MCF 10A (cell line): ENCODE measurements at regions of chr3 and their contacts with region 1.

Region 1: GRCh38 chr3:88203642-88204055 is 53.9 kb downstream of the C3orf38 start:
- DNase-seq: peak; percentile 75
- H3K4me3 Mint-ChIP-seq: no peak overlapping the region
- H3K27ac Mint-ChIP-seq: no peak overlapping the region
- H3K4me1 Mint-ChIP-seq: no peaks in the 10 kb centered on the region
- H3K27me3 Mint-ChIP-seq: no peaks in the 10 kb centered on the region
- CTCF ChIP-seq: peak; percentile 91

Region 2: GRCh38 chr3:88452228-88452627 is 248.6 kb after region 1 on chr3:
- CTCF ChIA-PET with region 1: no interaction called
- POLR2A ChIA-PET with region 1: no interaction called
- intact Hi-C with region 1: no loop called
- DNase-seq: no peak
- H3K4me3 Mint-ChIP-seq: no peak overlapping the region
- H3K27ac Mint-ChIP-seq: no peak overlapping the region
- H3K4me1 Mint-ChIP-seq: no peaks in the 10 kb centered on the region
- H3K27me3 Mint-ChIP-seq: no peaks in the 10 kb centered on the region
- CTCF ChIP-seq: no peak

Region 3: DNA sequence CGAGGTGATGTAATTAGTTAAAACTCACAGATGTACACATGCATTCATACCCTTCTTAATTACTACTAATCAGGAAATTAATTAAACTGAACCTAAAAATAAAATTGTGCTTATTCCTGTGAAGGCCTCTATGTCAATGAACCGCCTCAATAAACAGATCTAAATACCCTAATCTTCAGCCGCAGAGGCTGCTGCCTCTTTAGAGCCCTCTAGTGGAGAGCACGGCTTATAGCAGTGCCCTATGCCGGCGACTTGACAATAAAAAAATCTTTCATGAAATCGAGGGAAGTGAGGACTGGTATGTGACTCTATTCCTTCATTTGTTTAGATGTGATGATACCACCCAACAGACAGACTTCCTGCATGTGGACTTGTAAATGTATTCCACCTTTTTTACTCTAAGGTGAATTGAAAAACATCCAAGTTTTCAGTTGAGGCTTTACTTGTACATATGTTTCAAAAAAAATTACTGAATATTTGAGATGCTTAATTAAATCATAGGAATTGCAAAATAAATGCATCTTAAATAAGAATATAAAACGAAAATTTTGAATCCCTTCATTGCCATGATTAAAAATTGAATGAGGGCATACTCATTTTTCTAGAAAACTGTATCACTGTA is 895.4 kb after region 1 on chr3:
- CTCF ChIA-PET with region 1: no interaction called
- POLR2A ChIA-PET with region 1: no interaction called
- intact Hi-C with region 1: loop called (anchors 5 kb)
- DNase-seq: peak; percentile 60
- H3K4me3 Mint-ChIP-seq: no peak overlapping the region
- H3K27ac Mint-ChIP-seq: no peak overlapping the region
- H3K4me1 Mint-ChIP-seq: peaks cover 7% of the 10 kb centered on the region
- H3K27me3 Mint-ChIP-seq: no peaks in the 10 kb centered on the region
- CTCF ChIP-seq: peak; percentile 90

Region 4: GRCh38 chr3:89113903-89114840 is 910.5 kb after region 1 on chr3:
- CTCF ChIA-PET with region 1: interaction called, 6 read pairs
- POLR2A ChIA-PET with region 1: no interaction called
- intact Hi-C with region 1: loop called (anchors 5 kb)
- DNase-seq: peak; percentile 75
- H3K4me3 Mint-ChIP-seq: peak overlapping the region; percentile 85
- H3K27ac Mint-ChIP-seq: no peak overlapping the region
- H3K4me1 Mint-ChIP-seq: no peaks in the 10 kb centered on the region
- H3K27me3 Mint-ChIP-seq: peaks cover 35% of the 10 kb centered on the region
- CTCF ChIP-seq: peak; percentile 60

Region 5: DNA sequence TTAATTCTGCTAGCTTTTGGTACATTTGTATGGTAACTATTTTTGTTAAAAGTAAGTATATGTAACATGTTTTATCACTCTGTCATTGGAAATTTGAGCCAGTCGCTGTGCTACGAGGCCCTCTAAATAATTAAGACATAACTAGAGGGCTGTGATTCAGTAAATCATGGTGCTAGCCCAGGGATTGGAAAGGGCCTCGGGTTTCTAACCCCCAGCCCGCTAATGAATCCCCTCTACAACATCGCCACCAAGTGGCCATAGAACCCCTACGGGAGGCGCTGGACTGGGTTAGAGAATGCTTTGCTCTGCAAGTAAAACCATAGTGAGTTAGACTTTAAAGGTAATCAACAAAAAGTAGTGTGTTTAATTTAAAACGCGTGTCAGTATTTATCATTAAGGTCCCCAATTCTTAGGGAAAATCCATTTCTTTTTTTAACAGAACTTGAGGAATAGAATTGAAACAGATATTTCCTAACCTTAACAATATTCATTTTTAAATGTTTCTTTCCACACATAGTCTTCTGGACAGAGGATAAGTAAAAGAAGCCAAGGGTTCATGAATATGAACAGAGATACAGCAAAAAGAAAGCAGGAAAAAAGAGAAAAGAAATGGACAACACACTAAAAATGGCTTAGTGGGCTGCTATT is 1648.4 kb after region 1 on chr3:
- CTCF ChIA-PET with region 1: interaction called, 3 read pairs
- POLR2A ChIA-PET with region 1: no interaction called
- intact Hi-C with region 1: loop called (anchors 2 kb)
- DNase-seq: peak; percentile 65
- H3K4me3 Mint-ChIP-seq: no peak overlapping the region
- H3K27ac Mint-ChIP-seq: no peak overlapping the region
- H3K4me1 Mint-ChIP-seq: no peaks in the 10 kb centered on the region
- H3K27me3 Mint-ChIP-seq: no peaks in the 10 kb centered on the region
- CTCF ChIP-seq: peak; percentile 59

Region 6: DNA sequence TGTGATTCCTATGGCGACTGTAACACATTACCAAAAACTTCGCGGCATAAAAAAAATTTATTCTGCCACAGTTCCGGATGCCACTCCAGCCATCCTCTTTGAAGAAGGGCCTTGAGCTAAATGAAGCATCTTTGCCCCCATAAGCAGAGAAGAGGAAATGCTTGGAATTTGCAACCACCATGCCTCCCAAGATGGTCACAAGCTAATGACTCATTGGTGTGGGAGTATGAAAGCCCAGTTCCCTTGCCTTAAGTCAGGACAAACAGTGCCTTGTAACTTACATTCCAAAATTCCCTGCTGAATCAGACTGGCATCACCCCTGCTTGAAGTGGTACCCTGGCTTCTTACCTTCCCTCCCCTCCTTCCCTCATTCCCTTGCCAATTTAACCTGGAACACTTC is 1981.2 kb after region 1 on chr3:
- CTCF ChIA-PET with region 1: interaction called, 7 read pairs
- POLR2A ChIA-PET with region 1: no interaction called
- intact Hi-C with region 1: loop called (anchors 10 kb)
- DNase-seq: peak; percentile 44
- H3K4me3 Mint-ChIP-seq: no peak overlapping the region
- H3K27ac Mint-ChIP-seq: no peak overlapping the region
- H3K4me1 Mint-ChIP-seq: peaks cover 6% of the 10 kb centered on the region
- H3K27me3 Mint-ChIP-seq: no peaks in the 10 kb centered on the region
- CTCF ChIP-seq: no peak